Activated B cell treated with CpG ODN at 0.5 μM for 24 hours (primary cell): ENCODE measurements at regions of chr2 and their contacts with region 1.

Region 1: GRCh38 chr2:173354601-173355131 is at the start of gene CDCA7:
- DNase-seq: peak; percentile 49
- ATAC-seq: peak; percentile 72
- H3K4me3 Mint-ChIP-seq: peak within 1 kb of the TSS; percentile 87
- H3K27ac Mint-ChIP-seq: no peak within 1 kb of the TSS
- H3K4me1 Mint-ChIP-seq: peaks cover 29% of the 10 kb centered on the region
- H3K27me3 Mint-ChIP-seq: peaks cover 22% of the 10 kb centered on the region
- CTCF ChIP-seq: no peak
- total RNA-seq, gene CDCA7: 4.9 and 6.3 TPM in 2 replicates

Region 2: DNA sequence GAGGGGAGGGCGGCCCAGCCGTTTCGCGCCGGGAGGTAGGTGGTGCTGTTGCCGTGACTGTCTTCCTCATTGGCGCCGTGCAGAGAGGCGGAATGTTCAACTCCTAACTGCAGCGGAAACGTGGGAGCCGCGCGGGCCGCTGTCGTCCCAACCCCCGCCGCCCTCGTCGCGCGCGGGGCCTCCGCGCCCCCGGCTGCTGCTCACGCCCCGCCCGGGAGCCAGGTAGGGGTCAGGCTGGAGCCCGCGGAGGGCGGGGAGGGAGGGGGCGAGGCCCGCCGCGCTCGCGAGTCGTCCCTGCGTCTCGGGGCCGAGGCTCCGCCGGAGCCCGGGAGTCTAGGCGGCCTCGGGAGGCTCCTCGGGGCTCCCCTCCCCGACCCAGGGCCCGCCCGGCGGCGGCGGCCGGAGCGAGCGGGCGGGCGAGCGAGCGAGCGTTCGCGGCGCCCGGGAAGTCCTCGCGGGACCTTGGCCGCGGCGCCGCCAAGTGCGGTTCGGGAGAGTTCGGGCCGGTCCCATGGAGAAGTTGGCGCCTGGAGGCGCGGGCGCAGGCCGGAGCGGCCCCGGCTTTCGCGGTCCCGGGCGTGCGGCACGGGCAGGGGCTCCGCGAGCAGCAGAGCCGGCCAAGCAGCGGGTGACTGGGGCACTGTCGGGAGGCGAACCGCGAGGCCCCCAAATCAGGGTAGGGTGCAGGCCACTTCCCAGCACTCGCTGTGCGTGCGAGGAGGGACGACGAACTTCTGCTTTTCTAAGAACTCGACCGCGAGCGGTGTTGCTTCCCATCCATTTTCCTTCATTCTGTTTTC is 278.7 kb before region 1 on chr2 and contains the start of gene MAP3K20:
- CTCF ChIA-PET with region 1: no interaction called
- POLR2A ChIA-PET with region 1: no interaction called
- intact Hi-C with region 1: loop called (anchors 5 kb)
- DNase-seq: peak; percentile 42
- ATAC-seq: peak; percentile 68
- H3K4me3 Mint-ChIP-seq: peak within 1 kb of the TSS; percentile 89
- H3K27ac Mint-ChIP-seq: peak within 1 kb of the TSS; percentile 80
- H3K4me1 Mint-ChIP-seq: peaks cover 13% of the 10 kb centered on the region
- H3K27me3 Mint-ChIP-seq: peaks cover 4% of the 10 kb centered on the region
- CTCF ChIP-seq: no peak
- total RNA-seq, gene MAP3K20: 8.7 and 9.5 TPM in 2 replicates

Region 3: GRCh38 chr2:173286153-173286809 is 68.4 kb before region 1 on chr2:
- CTCF ChIA-PET with region 1: no interaction called
- POLR2A ChIA-PET with region 1: no interaction called
- intact Hi-C with region 1: loop called (anchors 5 kb)
- DNase-seq: no peak
- ATAC-seq: peak; percentile 54
- H3K4me3 Mint-ChIP-seq: no peak overlapping the region
- H3K27ac Mint-ChIP-seq: no peak overlapping the region
- H3K4me1 Mint-ChIP-seq: peaks cover 5% of the 10 kb centered on the region
- H3K27me3 Mint-ChIP-seq: no peaks in the 10 kb centered on the region
- CTCF ChIP-seq: no peak